Posterior cingulate gyrus (tissue), 11 donors: ENCODE measurements at regions of chr11 and their contacts with region 1.

Region 1: GRCh38 chr11:128172046-128172878 is 415.1 kb downstream of the ETS1 start:
- DNase-seq: peak; percentile 51 to 96 (median 83)

Region 2: GRCh38 chr11:128290106-128290840 is 118.0 kb after region 1 on chr11:
- intact Hi-C with region 1: loop called (anchors 10 kb)
- DNase-seq: peak in 9 of 10 donors; percentile 10 to 83 (median 34)

Region 3: GRCh38 chr11:128630367-128631230 is 458.3 kb after region 1 on chr11:
- intact Hi-C with region 1: loop called (anchors 2 kb)
- DNase-seq: peak; percentile 62 to 96 (median 85)

Region 4: GRCh38 chr11:128859563-128860441 is 687.5 kb after region 1 on chr11:
- intact Hi-C with region 1: loop called (anchors 1 kb)
- DNase-seq: peak in 6 of 10 donors; percentile 23 to 89 (median 46)

Region 5: GRCh38 chr11:128956401-128957201 is 784.3 kb after region 1 on chr11:
- intact Hi-C with region 1: loop called (anchors 5 kb)
- DNase-seq: no peak